ENCODE measurements at regions of chr1 and their contacts with region 1.

Region 1: DNA sequence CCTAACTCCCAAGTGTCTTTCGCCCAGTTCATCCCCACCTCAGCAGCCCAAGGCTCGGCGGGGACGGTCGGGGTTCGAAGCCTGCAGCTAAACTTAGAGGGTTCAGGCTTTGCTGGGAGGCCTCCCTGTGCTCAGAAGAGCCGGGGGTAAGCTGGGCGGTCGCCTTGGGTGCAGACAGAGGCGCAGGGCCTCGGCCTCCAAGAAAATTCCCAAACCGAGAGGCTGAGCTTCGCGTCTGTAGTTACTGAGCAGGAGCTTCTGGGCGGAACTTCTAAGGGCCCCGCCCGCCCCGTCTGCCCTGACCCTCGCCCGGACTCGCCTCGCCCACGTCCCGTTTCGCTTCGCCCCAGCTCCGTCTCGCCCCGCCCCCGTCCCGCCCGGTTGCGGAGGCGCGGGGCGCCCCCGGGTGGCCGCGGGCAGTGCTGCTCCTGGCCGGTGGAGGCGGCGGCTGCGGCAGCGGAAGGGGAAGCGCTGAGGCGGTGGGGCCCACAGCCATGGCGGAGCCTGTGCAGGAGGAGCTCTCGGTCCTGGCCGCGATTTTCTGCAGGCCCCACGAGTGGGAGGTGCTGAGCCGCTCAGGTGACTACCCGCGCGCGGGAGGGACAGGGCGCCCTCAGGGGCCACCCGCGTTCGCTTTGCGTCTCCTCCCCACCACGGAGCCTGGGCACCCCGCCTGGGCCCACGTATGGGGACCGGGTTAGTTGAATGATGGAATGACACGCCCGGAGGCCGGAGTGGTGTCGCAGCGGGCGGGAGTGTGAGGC is at the start of gene RWDD3:
- DNase-seq: peak; percentile 65
- ATAC-seq: peak; percentile 95
- H3K4me3 ChIP-seq: peak within 1 kb of the TSS; percentile 81 to 83
- H3K27ac ChIP-seq: peak within 1 kb of the TSS; percentile 72; the same call in 1 of the 2 replicates
- H3K4me1 ChIP-seq: peaks cover 5 to 7% of the 10 kb centered on the region in 2 experiments; a peak in 3 of 4 replicates
- H3K27me3 ChIP-seq: no peaks in the 10 kb centered on the region
- CTCF ChIP-seq: peak; percentile 55 to 77 (median 71)
- POLR2A ChIP-seq: peak; percentile 77
- RAD21 ChIP-seq: peak; percentile 87
- total RNA-seq, gene RWDD3: 12.4 TPM

Region 2: GRCh38 chr1:94854458-94855306 is 379.2 kb before region 1 on chr1:
- CTCF ChIA-PET with region 1: interaction called, 17 read pairs
- POLR2A ChIA-PET with region 1: interaction called, 3 read pairs
- RAD21 ChIA-PET with region 1: interaction called, 6 read pairs
- intact Hi-C with region 1: loop called (anchors 1 kb)
- DNase-seq: peak; percentile 86
- ATAC-seq: peak; percentile 92
- H3K4me3 ChIP-seq: peak overlapping the region; percentile 42 to 57
- H3K27ac ChIP-seq: peak overlapping the region; percentile 28; the same call in 1 of the 2 replicates
- H3K4me1 ChIP-seq: peaks cover 16 to 31% of the 10 kb centered on the region in 2 experiments
- H3K27me3 ChIP-seq: no peaks in the 10 kb centered on the region
- CTCF ChIP-seq: peak; percentile 91 to 94 (median 93)
- POLR2A ChIP-seq: no peak
- RAD21 ChIP-seq: peak; percentile 96

Region 3: GRCh38 chr1:95072532-95073419 is 161.1 kb before region 1 on chr1 and contains the start of gene ALG14:
- CTCF ChIA-PET with region 1: interaction called, 15 read pairs
- POLR2A ChIA-PET with region 1: interaction called, 5 read pairs
- RAD21 ChIA-PET with region 1: interaction called, 4 to 8 read pairs
- intact Hi-C with region 1: no loop called
- DNase-seq: peak; percentile 94
- ATAC-seq: peak; percentile 98
- H3K4me3 ChIP-seq: peak within 1 kb of the TSS; percentile 78 to 88
- H3K27ac ChIP-seq: peak within 1 kb of the TSS; percentile 74
- H3K4me1 ChIP-seq: peaks cover 0 to 12% of the 10 kb centered on the region in 2 experiments; a peak in 2 of 4 replicates
- H3K27me3 ChIP-seq: no peaks in the 10 kb centered on the region
- CTCF ChIP-seq: no peak
- POLR2A ChIP-seq: peak; percentile 74
- RAD21 ChIP-seq: no peak
- total RNA-seq, gene ALG14: 5.7 TPM

Region 4: GRCh38 chr1:95084317-95085176 is 149.4 kb before region 1 on chr1:
- CTCF ChIA-PET with region 1: interaction called, 16 read pairs
- POLR2A ChIA-PET with region 1: interaction called, 3 read pairs
- RAD21 ChIA-PET with region 1: interaction called in 1 of 2 experiments, 6 read pairs
- intact Hi-C with region 1: loop called (anchors 1 kb)
- DNase-seq: peak; percentile 47
- ATAC-seq: peak; percentile 82
- H3K4me3 ChIP-seq: no peak overlapping the region
- H3K27ac ChIP-seq: no peak overlapping the region
- H3K4me1 ChIP-seq: peaks cover 8 to 16% of the 10 kb centered on the region in 2 experiments; a peak in 3 of 4 replicates
- H3K27me3 ChIP-seq: no peaks in the 10 kb centered on the region
- CTCF ChIP-seq: peak; percentile 67 to 88 (median 84); a peak in 5 of 6 replicates
- POLR2A ChIP-seq: no peak
- RAD21 ChIP-seq: peak; percentile 56

Region 5: GRCh38 chr1:95223110-95223509 is 10.8 kb before region 1 on chr1:
- CTCF ChIA-PET with region 1: interaction called, 21 read pairs
- POLR2A ChIA-PET with region 1: interaction called, 3 read pairs
- RAD21 ChIA-PET with region 1: no interaction called
- intact Hi-C with region 1: no loop called
- DNase-seq: no peak
- ATAC-seq: no peak
- H3K4me3 ChIP-seq: no peak overlapping the region
- H3K27ac ChIP-seq: no peak overlapping the region
- H3K4me1 ChIP-seq: no peaks in the 10 kb centered on the region
- H3K27me3 ChIP-seq: no peaks in the 10 kb centered on the region
- CTCF ChIP-seq: no peak
- POLR2A ChIP-seq: no peak
- RAD21 ChIP-seq: no peak

Region 6: GRCh38 chr1:95245029-95245428 is 11.1 kb after region 1 on chr1:
- CTCF ChIA-PET with region 1: interaction called, 21 read pairs
- POLR2A ChIA-PET with region 1: interaction called, 5 read pairs
- RAD21 ChIA-PET with region 1: no interaction called
- intact Hi-C with region 1: no loop called
- DNase-seq: no peak
- ATAC-seq: no peak
- H3K4me3 ChIP-seq: no peak overlapping the region
- H3K27ac ChIP-seq: no peak overlapping the region
- H3K4me1 ChIP-seq: no peaks in the 10 kb centered on the region
- H3K27me3 ChIP-seq: no peaks in the 10 kb centered on the region
- CTCF ChIP-seq: no peak
- POLR2A ChIP-seq: no peak
- RAD21 ChIP-seq: no peak

Region 7: DNA sequence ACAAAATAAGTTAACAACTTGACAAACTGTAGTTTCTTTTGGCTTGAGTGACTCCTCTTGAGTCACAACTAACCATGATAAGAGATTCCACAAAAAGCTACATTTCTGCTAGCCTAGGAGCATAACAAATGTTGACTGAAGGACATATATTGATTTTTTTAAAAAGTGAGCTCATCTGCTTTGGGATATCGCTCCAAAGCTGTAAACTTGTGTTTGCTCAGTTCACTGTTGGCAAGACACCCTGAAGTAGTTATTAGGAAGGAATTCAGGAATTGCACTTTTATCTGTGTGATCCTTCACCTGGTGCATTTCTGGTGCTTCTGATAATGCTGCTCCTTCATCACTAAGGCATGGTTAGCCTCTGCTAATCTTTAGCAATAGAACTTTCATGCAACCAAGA is 23.8 kb after region 1 on chr1:
- CTCF ChIA-PET with region 1: interaction called, 13 read pairs
- POLR2A ChIA-PET with region 1: no interaction called
- RAD21 ChIA-PET with region 1: no interaction called
- intact Hi-C with region 1: no loop called
- DNase-seq: peak; percentile 10
- ATAC-seq: peak; percentile 27; the same call in 1 of the 2 replicates
- H3K4me3 ChIP-seq: no peak overlapping the region
- H3K27ac ChIP-seq: no peak overlapping the region
- H3K4me1 ChIP-seq: peaks cover 0 to 12% of the 10 kb centered on the region in 2 experiments; a peak in 1 of 4 replicates
- H3K27me3 ChIP-seq: no peaks in the 10 kb centered on the region
- CTCF ChIP-seq: no peak
- POLR2A ChIP-seq: no peak
- RAD21 ChIP-seq: no peak

Region 8: GRCh38 chr1:95475686-95476457 is 242.0 kb after region 1 on chr1:
- CTCF ChIA-PET with region 1: no interaction called
- POLR2A ChIA-PET with region 1: no interaction called
- RAD21 ChIA-PET with region 1: no interaction called
- intact Hi-C with region 1: no loop called
- DNase-seq: no peak
- ATAC-seq: no peak
- H3K4me3 ChIP-seq: no peak overlapping the region
- H3K27ac ChIP-seq: no peak overlapping the region
- H3K4me1 ChIP-seq: no peaks in the 10 kb centered on the region
- H3K27me3 ChIP-seq: no peaks in the 10 kb centered on the region
- CTCF ChIP-seq: no peak
- POLR2A ChIP-seq: no peak
- RAD21 ChIP-seq: no peak

Measured in HCT116 (cell line).